ENCODE measurements at regions of chr21 and their contacts with region 1.

Region 1: GRCh38 chr21:34888569-34889319 is 160.4 kb downstream of the RUNX1 start:
- DNase-seq: peak; percentile 87
- ATAC-seq: peak; percentile 68
- H3K4me3 Mint-ChIP-seq: peak overlapping the region; percentile 85
- H3K27ac Mint-ChIP-seq: peak overlapping the region; percentile 95
- H3K4me1 Mint-ChIP-seq: peaks cover 45% of the 10 kb centered on the region
- H3K27me3 Mint-ChIP-seq: peaks cover 5% of the 10 kb centered on the region

Region 2: GRCh38 chr21:34877482-34878128 is 11.1 kb before region 1 on chr21:
- CTCF ChIA-PET with region 1: interaction called, 12 read pairs
- DNase-seq: no peak
- ATAC-seq: no peak
- H3K4me3 Mint-ChIP-seq: no peak overlapping the region
- H3K27ac Mint-ChIP-seq: no peak overlapping the region
- H3K4me1 Mint-ChIP-seq: peaks cover 22% of the 10 kb centered on the region
- H3K27me3 Mint-ChIP-seq: no peaks in the 10 kb centered on the region

Region 3: GRCh38 chr21:34912159-34912945 is 23.6 kb after region 1 on chr21:
- CTCF ChIA-PET with region 1: no interaction called
- DNase-seq: no peak
- ATAC-seq: no peak
- H3K4me3 Mint-ChIP-seq: no peak overlapping the region
- H3K27ac Mint-ChIP-seq: no peak overlapping the region
- H3K4me1 Mint-ChIP-seq: peaks cover 12% of the 10 kb centered on the region
- H3K27me3 Mint-ChIP-seq: no peaks in the 10 kb centered on the region

Region 4: GRCh38 chr21:34986561-34987500 is 98.1 kb after region 1 on chr21:
- CTCF ChIA-PET with region 1: interaction called, 36 read pairs
- DNase-seq: peak; percentile 94
- ATAC-seq: peak; percentile 41
- H3K4me3 Mint-ChIP-seq: peak overlapping the region; percentile 62
- H3K27ac Mint-ChIP-seq: peak overlapping the region; percentile 87
- H3K4me1 Mint-ChIP-seq: peaks cover 89% of the 10 kb centered on the region
- H3K27me3 Mint-ChIP-seq: no peaks in the 10 kb centered on the region

Region 5: DNA sequence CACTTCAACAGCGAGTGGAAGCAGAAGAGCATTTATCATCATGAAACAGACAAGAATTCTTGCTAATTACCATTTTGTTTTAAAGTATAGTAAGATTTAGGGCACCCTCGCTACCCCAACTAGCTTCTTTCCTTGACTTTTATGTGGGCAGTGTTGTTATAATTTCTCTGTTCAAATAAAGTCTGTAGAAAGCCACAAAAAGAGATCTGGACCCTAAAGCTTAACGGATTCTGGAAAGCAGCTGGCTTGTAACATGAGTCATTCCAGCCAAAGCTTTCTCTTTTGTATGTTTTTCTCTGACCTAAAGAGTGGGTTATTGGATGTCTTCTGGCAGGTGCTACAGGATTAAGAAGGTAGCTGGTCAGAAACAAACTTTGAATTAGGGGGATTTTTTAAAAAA is 122.9 kb after region 1 on chr21:
- CTCF ChIA-PET with region 1: no interaction called
- DNase-seq: no peak
- ATAC-seq: no peak
- H3K4me3 Mint-ChIP-seq: no peak overlapping the region
- H3K27ac Mint-ChIP-seq: no peak overlapping the region
- H3K4me1 Mint-ChIP-seq: peaks cover 38% of the 10 kb centered on the region
- H3K27me3 Mint-ChIP-seq: no peaks in the 10 kb centered on the region

Region 6: DNA sequence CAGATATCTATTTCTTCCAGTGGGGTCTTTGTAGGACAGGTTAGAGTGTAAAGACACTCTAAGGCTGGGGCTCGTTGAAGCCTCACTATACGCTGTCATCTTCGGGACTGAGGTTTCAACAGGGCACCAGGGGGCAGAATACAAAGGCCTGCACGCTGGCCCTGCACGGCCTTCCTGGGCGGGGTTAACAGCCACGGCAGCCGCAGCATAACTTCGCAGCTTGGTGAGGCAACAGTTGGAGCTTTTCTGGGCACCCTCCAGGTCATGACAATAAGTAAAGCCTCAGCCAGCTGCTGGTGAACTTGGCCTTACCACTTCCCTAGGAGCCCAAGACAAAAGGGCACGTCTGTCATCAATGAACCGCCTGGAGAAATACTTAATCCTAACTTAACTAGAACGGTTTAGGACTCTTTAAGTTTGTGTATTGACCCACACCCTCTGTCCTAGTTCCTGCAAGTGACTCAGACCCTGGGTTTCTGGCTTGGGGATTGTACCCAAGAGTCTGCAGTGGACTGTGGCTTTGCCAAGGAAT is 162.6 kb after region 1 on chr21:
- CTCF ChIA-PET with region 1: interaction called, 128 read pairs
- DNase-seq: peak; percentile 93
- ATAC-seq: peak; percentile 56
- H3K4me3 Mint-ChIP-seq: peak overlapping the region; percentile 43
- H3K27ac Mint-ChIP-seq: peak overlapping the region; percentile 96
- H3K4me1 Mint-ChIP-seq: peaks cover 54% of the 10 kb centered on the region
- H3K27me3 Mint-ChIP-seq: peaks cover 15% of the 10 kb centered on the region

Measured in activated CD8-positive, alpha-beta memory T cell treated with anti-CD3 and anti-CD28 coated beads, Interleukin-2, amount 10 ng/mL, durations not matched to agents 7 days and 5 days (primary cell).